ENCODE measurements at regions of chr17 and their contacts with region 1.

Region 1: GRCh38 chr17:37134050-37134449 is 185.3 kb downstream of the AATF start:
- DNase-seq: peak; percentile 54
- H3K4me3 ChIP-seq: no peak overlapping the region
- H3K27ac ChIP-seq: peak overlapping the region in 1 of 2 experiments; percentile 96; a peak in 2 of 4 replicates
- H3K4me1 ChIP-seq: peaks cover 0 to 47% of the 10 kb centered on the region in 2 experiments; a peak in 2 of 4 replicates
- H3K27me3 ChIP-seq: no peaks in the 10 kb centered on the region
- CTCF ChIP-seq: no peak
- EP300 ChIP-seq: peak in 1 of 2 experiments; percentile 86; a peak in 2 of 4 replicates
- RAD21 ChIP-seq: peak; percentile 45

Region 2: DNA sequence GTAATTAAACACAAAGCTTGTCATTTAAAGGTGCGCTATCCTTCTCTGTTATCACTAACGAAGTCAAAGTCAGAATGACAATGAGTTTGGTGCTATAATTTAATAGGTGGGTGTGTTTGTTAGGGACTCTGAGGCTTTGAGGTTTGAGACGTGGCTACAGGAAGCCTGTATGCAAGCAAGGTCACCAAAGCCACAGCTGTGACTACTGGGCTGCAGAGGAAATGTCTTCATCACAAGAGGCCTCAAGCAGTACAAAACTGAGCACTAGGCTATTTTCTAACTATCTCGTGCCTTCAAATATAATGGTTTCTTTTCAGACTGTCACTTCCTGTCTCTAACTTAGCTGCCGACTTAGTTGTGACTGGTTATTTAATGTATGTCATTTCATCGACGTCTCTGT is 44.1 kb before region 1 on chr17:
- CTCF ChIA-PET with region 1: interaction called, 11 read pairs
- POLR2A ChIA-PET with region 1: no interaction called
- DNase-seq: no peak
- H3K4me3 ChIP-seq: no peak overlapping the region
- H3K27ac ChIP-seq: no peak overlapping the region
- H3K4me1 ChIP-seq: peaks cover 0 to 16% of the 10 kb centered on the region in 2 experiments; a peak in 1 of 4 replicates
- H3K27me3 ChIP-seq: no peaks in the 10 kb centered on the region
- CTCF ChIP-seq: no peak
- EP300 ChIP-seq: no peak
- RAD21 ChIP-seq: no peak

Region 3: DNA sequence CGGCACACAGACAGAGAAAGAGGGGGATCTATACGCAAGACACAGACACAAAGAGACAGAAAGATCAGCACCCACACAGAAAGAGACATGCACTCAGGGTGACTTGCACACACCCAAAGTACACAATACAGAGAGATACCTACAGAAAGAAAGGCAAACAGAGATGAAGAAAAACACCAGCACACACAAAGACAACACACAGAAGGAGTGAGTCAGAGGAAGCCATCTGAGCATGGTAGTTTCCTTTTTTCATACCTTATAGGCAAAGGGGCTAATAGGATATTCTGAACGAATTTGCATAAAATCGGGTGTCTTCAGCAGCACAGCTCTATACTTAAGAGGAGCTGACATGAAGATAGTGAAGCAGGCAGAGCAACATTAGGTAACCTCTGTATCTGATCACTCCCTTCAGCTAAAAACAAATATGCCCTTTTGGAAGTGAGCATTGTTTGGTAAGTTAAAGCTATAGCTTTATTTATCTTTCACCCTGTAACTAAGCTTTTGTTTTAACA is 13.3 kb after region 1 on chr17:
- CTCF ChIA-PET with region 1: interaction called, 13 read pairs
- POLR2A ChIA-PET with region 1: no interaction called
- DNase-seq: no peak
- H3K4me3 ChIP-seq: no peak overlapping the region
- H3K27ac ChIP-seq: peak overlapping the region; percentile 2 to 78; a peak in 3 of 4 replicates
- H3K4me1 ChIP-seq: peaks cover 11 to 32% of the 10 kb centered on the region in 2 experiments; a peak in 3 of 4 replicates
- H3K27me3 ChIP-seq: no peaks in the 10 kb centered on the region
- CTCF ChIP-seq: no peak
- EP300 ChIP-seq: no peak
- RAD21 ChIP-seq: no peak

Region 4: DNA sequence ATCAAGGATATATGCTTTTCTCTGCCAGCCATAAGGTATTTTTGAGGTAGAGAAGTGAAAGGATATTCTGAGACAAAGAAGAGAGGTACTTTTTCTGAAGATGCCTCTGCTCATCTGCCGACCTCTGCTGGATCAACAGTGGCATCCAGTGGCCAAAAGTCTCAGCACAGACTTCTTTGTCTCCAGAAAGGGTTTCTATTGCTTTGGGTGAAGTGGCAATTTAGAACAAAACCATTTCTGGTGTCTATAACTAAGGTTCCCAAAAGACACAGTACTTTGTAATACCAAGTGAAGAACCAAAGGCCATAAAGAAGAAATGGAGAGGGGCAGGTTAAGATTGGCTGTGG is 86.5 kb after region 1 on chr17:
- CTCF ChIA-PET with region 1: no interaction called
- POLR2A ChIA-PET with region 1: no interaction called
- DNase-seq: peak; percentile 45
- H3K4me3 ChIP-seq: no peak overlapping the region
- H3K27ac ChIP-seq: peak overlapping the region; percentile 11 to 58; a peak in 1 of 4 replicates
- H3K4me1 ChIP-seq: peaks cover 0 to 9% of the 10 kb centered on the region in 2 experiments; a peak in 2 of 4 replicates
- H3K27me3 ChIP-seq: no peaks in the 10 kb centered on the region
- CTCF ChIP-seq: peak; percentile 75
- EP300 ChIP-seq: no peak
- RAD21 ChIP-seq: peak; percentile 86

Measured in SK-N-SH (cell line).